GM13977 (cell line): ENCODE measurements at regions of chr9 and their contacts with region 1.

Region 1: GRCh38 chr9:112793213-112793810 is 42.8 kb downstream of the SNX30 start:
- DNase-seq: peak; percentile 66
- CTCF ChIP-seq: peak; percentile 93

Region 2: GRCh38 chr9:111759762-111760639 is 1033.3 kb before region 1 on chr9:
- in situ Hi-C with region 1: loop called (anchors 25 kb)
- DNase-seq: peak; percentile 48
- CTCF ChIP-seq: peak; percentile 59

Region 3: GRCh38 chr9:112097712-112098688 is 695.3 kb before region 1 on chr9:
- in situ Hi-C with region 1: loop called (anchors 25 kb)
- DNase-seq: peak; percentile 66
- CTCF ChIP-seq: peak; percentile 84

Region 4: DNA sequence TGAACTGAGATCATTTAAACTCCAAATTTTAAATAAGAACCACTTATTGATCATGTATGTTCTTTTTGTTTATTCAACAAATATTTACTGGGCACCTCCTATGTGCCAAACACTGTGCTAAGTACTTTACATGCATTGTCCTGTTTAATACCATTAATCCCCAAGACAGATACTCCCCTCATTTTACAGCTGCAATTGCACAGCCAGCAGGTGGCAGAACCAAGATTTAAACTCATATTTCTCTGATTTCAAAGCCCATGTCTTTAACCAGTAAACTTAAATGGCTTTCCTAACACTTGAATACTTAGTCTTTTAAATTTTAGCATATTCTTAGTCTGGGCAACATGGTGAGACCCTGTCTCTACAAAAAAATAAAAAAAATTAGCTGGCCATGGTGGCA is 350.1 kb before region 1 on chr9:
- in situ Hi-C with region 1: loop called (anchors 25 kb)
- DNase-seq: no peak
- CTCF ChIP-seq: peak; percentile 64